ENCODE measurements at regions of chr17 and their contacts with region 1.

Region 1: GRCh38 chr17:45123930-45124796 is 8.2 kb downstream of the PLCD3 start:
- DNase-seq: peak in 1 of 2 donors; percentile 56
- ATAC-seq: peak in 1 of 2 donors; percentile 41
- H3K4me3 ChIP-seq: no peak overlapping the region
- H3K27ac ChIP-seq: peak overlapping the region; percentile 46 to 69 (median 56)
- H3K4me1 ChIP-seq: peaks cover 53 to 54% of the 10 kb centered on the region in 2 donors
- H3K27me3 ChIP-seq: no peaks in the 10 kb centered on the region
- CTCF ChIP-seq: no peak
- POLR2A ChIP-seq: no peak

Region 2: DNA sequence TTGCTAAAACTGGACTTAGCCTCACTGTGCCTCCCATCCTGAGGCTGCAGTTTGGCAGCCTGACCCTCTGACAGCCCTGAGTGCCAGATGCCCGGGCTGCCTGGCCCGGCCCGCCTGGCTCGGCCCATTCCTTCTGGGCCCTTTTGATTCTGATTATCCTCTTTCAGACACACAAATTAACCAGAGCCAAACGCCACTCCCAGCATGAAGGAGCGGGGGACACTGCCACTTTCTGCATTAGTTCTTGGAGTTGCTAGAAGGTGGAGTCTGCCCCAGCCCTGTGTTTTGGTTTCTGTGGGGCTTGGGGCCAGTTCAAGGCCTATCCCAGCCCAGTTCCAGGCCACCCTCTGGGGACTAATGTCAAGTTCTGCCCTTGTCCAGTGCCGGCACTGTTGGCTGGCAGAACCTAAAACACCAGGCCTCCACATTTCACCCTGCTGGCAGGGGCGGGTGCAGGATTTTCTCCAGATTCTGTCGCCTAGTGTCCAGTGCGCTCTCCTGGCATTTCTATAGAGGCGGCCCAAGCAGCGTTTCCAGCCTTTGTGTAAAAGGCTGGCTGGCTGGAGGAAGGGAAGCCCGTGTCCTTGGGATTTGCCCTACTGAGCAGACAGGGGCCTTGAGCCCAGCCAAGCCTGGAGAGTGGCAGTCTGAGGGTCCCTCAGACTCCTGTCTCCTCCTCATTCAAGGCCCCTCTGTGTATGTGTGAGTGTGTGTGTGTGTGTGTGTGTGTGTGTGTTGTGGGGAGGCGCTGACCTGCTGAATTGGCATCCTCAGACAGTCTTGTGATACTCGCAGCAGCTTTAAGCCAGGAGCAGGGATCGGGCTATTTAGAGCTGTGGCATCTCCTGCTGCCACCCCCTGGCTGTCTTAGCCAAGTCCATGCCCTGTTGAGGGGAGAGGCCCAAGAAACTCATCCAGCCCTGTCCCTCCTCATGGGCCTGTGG is 13.2 kb before region 1 on chr17:
- in situ Hi-C with region 1: no loop called
- intact Hi-C with region 1: loop called (anchors 2 kb)
- DNase-seq: peak; percentile 86 to 93
- ATAC-seq: peak; percentile 88 to 89
- H3K4me3 ChIP-seq: no peak overlapping the region
- H3K27ac ChIP-seq: peak overlapping the region; percentile 88 to 96 (median 92)
- H3K4me1 ChIP-seq: peaks cover 55 to 69% of the 10 kb centered on the region in 2 donors
- H3K27me3 ChIP-seq: no peaks in the 10 kb centered on the region
- CTCF ChIP-seq: no peak
- POLR2A ChIP-seq: no peak